ENCODE measurements at regions of chr16 and their contacts with region 1.

Region 1: DNA sequence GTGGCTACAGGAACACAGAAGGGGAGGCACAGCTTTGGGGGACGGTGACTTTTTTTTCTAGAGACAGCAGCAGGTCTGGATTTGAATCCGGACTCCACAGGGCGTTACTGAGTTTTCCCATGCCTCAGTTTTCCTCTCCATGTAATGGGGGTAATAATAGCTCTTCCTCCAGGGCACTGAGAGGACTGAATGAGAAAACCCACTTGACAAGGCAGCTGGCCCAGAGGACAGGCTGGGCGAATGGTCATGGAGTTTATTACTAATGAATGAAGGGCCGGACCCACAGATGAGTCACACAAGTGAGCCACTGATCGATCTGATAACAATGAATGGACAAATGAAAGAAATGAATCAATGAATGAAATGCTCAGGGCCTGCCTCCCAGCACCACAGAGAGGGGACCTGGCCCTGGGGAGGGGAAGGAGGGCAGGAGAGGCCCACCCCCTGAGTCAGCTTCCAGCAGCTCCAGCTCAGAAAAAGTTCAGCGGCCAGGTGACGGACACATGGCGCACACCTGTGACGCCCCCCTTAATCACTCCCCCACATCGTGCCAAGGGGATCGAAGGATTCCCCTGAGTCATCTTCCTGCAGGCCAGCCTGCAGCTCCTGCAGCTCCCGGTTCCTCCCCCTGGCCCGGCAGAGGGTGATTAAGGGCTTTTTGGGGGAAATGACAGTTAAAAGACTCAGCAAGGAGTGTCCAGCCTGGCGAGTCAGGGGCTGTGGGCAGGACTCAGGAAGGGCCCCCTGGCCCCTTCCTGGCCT is 54.3 kb downstream of the SOCS1 start:
- DNase-seq: peak; percentile 89 to 94
- H3K4me3 ChIP-seq: peak overlapping the region; percentile 28; the same call in 1 of the 2 replicates
- H3K27ac ChIP-seq: peak overlapping the region; percentile 75
- H3K4me1 ChIP-seq: peaks cover 37% of the 10 kb centered on the region
- H3K27me3 ChIP-seq: no peaks in the 10 kb centered on the region
- CTCF ChIP-seq: no peak

Region 2: DNA sequence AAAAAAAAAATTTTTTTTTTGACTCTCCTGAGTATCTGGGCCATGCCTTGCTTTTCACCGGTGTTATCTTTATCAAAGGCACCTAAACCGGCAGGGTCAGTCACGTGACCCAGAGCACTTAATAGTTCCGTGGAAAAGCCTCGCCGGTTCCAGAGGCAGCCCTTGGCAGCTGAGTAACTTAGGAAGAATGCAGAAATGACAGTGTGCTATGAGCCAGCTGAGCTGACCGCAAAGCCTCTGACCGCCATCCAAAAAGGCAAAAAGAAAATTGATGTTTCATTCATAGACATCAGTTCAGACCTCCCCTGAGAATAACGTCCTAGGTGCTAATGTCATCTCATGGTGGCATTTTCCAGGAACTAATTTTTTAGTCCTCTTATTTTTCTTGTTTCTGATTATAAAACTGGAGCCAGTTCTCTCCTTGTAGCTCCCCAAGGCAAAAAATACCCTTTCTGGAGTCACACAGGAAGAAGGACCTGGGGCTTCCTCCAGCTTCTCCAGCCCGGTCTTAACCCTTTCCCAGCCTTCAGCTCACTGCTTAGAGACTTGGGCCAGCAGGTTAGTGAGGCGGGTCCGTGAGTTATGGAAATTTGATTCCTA is 68.2 kb before region 1 on chr16:
- CTCF ChIA-PET with region 1: no interaction called
- POLR2A ChIA-PET with region 1: no interaction called
- intact Hi-C with region 1: loop called (anchors 5 kb)
- DNase-seq: peak; percentile 90 to 96
- H3K4me3 ChIP-seq: peak overlapping the region; percentile 9; the same call in 1 of the 2 replicates
- H3K27ac ChIP-seq: peak overlapping the region; percentile 59
- H3K4me1 ChIP-seq: peaks cover 50% of the 10 kb centered on the region
- H3K27me3 ChIP-seq: no peaks in the 10 kb centered on the region
- CTCF ChIP-seq: no peak

Region 3: DNA sequence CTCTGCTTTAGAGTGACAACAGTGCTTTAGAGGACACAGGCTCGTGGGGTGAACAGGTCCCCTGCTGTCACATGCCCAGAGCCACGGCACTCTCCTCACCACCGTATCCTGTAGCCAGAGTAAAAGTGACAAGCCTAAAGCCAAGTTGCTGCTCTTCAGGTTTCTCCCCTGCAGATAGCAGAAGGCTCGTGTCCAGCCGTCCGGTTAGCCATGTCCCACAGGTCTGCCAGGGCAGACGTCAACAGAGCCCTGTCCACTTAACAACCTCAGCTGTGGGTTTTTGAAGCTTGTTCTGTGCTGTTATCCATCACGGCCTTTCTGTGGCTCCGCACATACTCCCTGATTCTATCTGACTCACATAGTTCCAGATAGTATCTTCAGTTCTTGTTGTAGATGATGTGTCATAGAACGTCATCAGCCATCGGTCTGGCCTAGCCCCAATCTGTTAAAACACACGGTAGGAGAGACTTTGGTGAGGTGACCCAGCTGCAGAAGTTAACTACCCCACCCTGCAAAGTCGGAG is 46.3 kb before region 1 on chr16:
- CTCF ChIA-PET with region 1: no interaction called
- POLR2A ChIA-PET with region 1: no interaction called
- intact Hi-C with region 1: loop called (anchors 1 kb)
- DNase-seq: peak; percentile 23 to 45
- H3K4me3 ChIP-seq: no peak overlapping the region
- H3K27ac ChIP-seq: no peak overlapping the region
- H3K4me1 ChIP-seq: no peaks in the 10 kb centered on the region
- H3K27me3 ChIP-seq: no peaks in the 10 kb centered on the region
- CTCF ChIP-seq: no peak

Region 4: GRCh38 chr16:11283820-11284248 is 82.2 kb after region 1 on chr16:
- CTCF ChIA-PET with region 1: no interaction called
- POLR2A ChIA-PET with region 1: no interaction called
- intact Hi-C with region 1: no loop called
- DNase-seq: no peak
- H3K4me3 ChIP-seq: no peak overlapping the region
- H3K27ac ChIP-seq: no peak overlapping the region
- H3K4me1 ChIP-seq: no peaks in the 10 kb centered on the region
- H3K27me3 ChIP-seq: no peaks in the 10 kb centered on the region
- CTCF ChIP-seq: no peak